AG04449 (cell line): ENCODE measurements at regions of chr17 and their contacts with region 1.

Region 1: GRCh38 chr17:35088881-35089585 is 25.5 kb upstream of the RFFL start:
- DNase-seq: no peak
- H3K4me3 ChIP-seq: peak overlapping the region; percentile 80
- CTCF ChIP-seq: peak; percentile 86

Region 2: DNA sequence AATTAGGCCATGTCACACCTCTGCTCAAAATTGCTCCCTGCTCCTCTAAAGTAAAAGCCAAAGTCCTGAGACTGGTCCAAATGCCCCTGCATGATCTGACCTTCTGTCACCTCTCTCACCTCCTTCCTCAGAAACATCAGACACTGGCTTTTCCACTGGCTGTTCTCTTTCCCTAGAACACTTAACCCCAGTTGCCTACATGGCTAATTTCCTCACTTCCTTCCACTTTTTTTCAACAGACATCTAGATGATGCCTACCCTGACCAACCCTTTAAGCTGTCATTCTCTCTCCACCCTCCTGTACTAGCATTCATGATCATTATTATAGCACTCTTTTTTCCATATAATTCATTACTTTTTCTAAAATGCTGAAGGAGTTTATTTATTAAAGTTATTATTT is 158.8 kb before region 1 on chr17:
- CTCF ChIA-PET with region 1: no interaction called
- POLR2A ChIA-PET with region 1: no interaction called
- DNase-seq: no peak
- H3K4me3 ChIP-seq: no peak overlapping the region
- CTCF ChIP-seq: no peak

Region 3: DNA sequence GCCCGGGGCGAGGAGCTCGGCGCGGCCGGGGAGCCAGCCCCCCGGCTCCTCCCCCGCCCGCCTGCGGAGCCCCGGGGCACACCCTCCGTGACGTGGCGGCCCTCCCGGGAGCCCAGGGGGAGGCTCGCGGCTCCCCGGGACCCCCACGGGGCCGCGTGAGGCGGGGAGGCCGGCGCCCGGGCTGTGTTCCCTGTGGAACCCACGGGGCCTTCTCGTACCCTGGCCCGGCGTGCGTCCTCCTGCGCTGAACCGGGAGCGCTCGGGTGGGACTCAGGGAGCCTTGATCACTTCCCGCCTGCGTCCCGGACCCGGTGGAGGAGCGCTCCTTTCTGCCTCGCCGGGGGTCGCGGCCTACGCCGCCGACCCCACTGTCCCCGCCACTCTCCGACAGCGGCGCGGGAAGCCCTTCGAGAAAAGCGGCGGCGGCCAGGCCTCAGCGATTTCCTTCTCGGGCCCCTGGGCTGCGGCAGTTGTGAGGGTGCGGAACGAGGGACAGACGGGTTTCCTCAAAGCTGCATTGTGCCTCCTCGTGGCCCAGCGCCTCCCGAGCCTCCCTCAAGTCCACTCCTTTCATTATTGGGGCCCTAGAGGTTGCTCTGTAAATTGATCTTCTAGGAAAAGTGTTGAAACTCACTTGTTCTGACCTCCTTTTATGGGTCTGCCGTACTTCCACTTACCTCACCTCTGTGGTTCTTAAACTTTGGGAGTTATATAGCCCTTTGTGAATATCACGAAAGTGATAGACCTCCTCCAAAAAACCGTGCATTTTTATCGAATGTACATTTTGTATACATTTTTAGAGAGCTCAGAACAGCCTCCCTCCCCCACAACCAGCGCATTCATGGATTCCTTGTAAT is 108.1 kb before region 1 on chr17:
- CTCF ChIA-PET with region 1: interaction called, 17 read pairs
- POLR2A ChIA-PET with region 1: no interaction called
- DNase-seq: no peak
- H3K4me3 ChIP-seq: peak overlapping the region; percentile 76
- CTCF ChIP-seq: peak; percentile 70

Region 4: DNA sequence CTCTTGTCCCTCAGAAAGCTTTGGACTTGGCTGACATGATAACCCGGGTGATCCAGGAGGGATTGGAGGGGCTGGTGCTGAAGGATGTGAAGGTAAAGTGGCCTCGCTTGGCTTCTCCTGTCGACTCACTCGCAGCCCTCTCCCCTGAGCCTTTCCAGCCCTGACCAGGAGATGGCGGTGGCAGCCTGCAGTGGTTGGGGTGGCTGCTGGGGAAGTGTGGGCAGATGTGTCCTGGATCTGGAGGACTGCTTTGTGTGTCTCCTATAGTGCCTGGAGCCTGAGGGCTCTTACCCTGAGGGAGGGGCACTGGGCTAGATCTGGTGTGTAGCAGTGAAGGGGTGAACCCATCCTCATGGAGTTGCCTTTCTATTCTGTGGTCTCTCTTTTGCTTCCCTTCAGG is 90.8 kb before region 1 on chr17:
- CTCF ChIA-PET with region 1: interaction called, 83 read pairs
- POLR2A ChIA-PET with region 1: interaction called, 3 read pairs
- DNase-seq: no peak
- H3K4me3 ChIP-seq: no peak overlapping the region
- CTCF ChIP-seq: peak; percentile 96

Region 5: DNA sequence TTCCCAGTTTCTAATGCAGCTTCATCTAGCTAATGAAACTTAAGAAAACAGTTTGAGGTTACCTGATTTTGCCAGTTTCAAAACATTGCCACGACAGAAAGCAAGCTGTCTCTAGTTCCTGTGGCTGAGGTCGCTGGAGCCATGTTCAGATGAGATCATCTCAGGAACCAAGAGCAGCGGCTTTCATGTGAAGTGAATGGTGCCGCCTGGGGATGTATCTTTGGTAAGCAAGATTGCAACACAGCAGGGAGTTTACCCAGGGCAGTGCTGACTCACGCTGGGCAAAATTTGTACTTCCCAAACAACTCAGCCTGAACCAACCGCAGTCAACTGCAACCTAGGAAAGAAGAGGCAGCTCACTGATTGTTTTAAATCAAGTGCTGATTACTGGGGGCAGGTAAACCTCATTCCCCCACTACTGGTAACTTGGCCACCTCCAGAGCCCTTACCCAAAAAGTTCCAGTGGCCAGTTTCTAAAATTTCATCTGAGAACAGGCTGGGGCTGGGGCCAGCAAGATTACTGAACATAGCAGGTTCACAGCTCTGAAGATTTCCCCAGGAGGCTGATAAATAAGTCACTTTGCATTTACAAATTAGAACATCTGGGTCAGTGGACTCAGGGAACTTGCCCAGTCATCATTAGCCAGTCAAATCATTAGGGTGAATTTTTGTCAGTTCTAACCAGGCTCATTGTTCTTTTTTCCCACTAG is 25.4 kb before region 1 on chr17 and contains the start of gene RFFL:
- CTCF ChIA-PET with region 1: interaction called, 10 read pairs
- POLR2A ChIA-PET with region 1: no interaction called
- DNase-seq: peak; percentile 89
- H3K4me3 ChIP-seq: peak within 1 kb of the TSS; percentile 38; the same call in 1 of the 2 replicates
- CTCF ChIP-seq: peak; percentile 16

Region 6: DNA sequence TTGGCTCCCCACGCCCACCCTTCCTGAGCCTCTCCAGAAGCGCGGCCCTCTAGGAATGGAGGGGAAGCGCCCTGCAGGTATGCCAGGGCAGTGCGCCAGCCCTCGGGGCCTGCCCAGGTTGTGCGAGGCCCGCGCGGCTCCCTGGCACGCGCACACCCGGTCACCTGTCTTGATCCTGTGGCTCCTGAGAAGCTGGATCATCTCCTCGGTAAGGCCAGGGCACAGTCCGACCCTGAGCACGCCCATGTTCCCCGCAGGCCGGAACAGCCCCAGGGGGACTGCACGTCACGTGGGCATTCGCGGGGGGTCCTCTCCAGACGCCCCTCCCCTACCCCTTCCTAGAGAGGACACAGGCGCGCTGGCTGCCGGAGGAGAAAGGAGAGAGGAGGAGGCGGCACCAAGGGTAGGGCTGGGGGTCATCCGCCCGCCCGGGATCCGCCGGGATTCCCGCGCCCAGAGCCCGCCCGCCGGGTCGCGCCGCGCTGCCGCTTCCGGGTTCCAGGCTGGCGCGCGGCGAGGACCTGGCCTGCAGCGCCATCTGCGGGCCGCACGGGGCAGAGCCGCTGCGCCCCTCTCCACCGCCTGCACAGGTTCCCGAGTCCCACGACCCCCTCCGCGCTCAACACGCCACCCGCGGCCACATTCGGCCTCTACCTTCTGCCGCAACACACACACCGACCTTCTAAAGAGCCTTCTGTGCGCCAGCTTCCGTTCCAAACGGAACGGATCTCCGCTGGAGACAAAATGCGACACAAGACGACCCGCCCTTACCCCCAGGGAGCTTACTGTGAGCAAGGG is 30.5 kb after region 1 on chr17 and contains the start of gene RAD51D:
- CTCF ChIA-PET with region 1: interaction called, 30 read pairs
- POLR2A ChIA-PET with region 1: interaction called, 3 read pairs
- DNase-seq: no peak
- H3K4me3 ChIP-seq: peak within 1 kb of the TSS; percentile 83
- CTCF ChIP-seq: peak; percentile 92

Region 7: DNA sequence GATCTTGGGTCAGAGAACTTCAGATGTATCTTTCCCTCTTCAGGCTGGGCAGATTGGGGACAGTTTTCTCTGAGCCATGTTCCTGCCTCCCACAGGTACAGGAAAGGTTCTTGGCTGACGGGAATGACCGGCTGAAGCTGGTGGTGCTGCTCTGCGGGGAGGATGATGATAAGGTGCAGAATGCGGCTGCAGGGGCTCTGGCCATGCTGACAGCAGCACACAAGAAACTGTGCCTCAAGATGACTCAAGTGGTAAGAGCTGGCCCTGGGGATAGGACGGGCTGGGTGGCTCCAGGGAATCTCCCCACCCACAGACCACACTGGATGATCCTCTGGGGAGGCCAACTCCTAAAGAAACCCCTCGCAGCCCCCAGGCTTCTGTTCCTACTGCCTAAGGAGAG is 94.3 kb after region 1 on chr17:
- CTCF ChIA-PET with region 1: no interaction called
- POLR2A ChIA-PET with region 1: no interaction called
- DNase-seq: no peak
- H3K4me3 ChIP-seq: no peak overlapping the region
- CTCF ChIP-seq: no peak